ENCODE measurements at regions of chr5 and their contacts with region 1.

Region 1: GRCh38 chr5:38809388-38810359 is 36.1 kb upstream of the OSMR start:
- DNase-seq: peak; percentile 80
- H3K4me3 ChIP-seq: no peak overlapping the region
- H3K27ac ChIP-seq: peak overlapping the region; percentile 68
- H3K4me1 ChIP-seq: peaks cover 50% of the 10 kb centered on the region
- H3K27me3 ChIP-seq: no peaks in the 10 kb centered on the region
- CTCF ChIP-seq: peak; percentile 91

Region 2: DNA sequence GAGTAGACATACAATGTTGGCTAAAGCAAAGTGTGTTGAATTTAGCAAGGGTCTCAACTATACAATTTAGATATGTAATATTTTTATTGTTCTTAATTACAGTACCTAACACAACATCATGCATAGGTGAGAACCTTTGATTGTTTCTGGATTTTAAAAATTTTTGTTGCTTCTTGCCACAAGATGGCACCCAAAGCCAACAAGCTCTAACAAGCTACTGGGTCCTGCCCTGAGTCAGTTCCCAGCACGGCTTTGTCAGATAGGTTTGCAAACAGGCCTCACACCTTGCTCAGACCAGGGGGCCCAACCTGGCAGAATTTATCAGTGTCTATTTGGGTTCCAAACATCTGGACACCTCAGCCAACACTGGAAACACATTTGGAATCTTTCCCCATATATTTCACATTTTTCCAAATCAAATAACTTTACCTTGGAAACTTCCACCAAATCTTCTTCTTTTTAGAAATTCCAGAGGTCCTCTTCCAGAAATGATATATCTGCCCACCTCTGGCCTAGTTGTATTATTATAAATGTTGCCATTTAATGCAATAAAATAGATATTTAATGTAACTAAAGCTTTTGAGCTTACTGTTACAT is 600.8 kb before region 1 on chr5:
- intact Hi-C with region 1: no loop called
- DNase-seq: no peak
- H3K4me3 ChIP-seq: no peak overlapping the region
- H3K27ac ChIP-seq: no peak overlapping the region
- H3K4me1 ChIP-seq: no peaks in the 10 kb centered on the region
- H3K27me3 ChIP-seq: peaks cover 49% of the 10 kb centered on the region
- CTCF ChIP-seq: peak; percentile 59

Region 3: DNA sequence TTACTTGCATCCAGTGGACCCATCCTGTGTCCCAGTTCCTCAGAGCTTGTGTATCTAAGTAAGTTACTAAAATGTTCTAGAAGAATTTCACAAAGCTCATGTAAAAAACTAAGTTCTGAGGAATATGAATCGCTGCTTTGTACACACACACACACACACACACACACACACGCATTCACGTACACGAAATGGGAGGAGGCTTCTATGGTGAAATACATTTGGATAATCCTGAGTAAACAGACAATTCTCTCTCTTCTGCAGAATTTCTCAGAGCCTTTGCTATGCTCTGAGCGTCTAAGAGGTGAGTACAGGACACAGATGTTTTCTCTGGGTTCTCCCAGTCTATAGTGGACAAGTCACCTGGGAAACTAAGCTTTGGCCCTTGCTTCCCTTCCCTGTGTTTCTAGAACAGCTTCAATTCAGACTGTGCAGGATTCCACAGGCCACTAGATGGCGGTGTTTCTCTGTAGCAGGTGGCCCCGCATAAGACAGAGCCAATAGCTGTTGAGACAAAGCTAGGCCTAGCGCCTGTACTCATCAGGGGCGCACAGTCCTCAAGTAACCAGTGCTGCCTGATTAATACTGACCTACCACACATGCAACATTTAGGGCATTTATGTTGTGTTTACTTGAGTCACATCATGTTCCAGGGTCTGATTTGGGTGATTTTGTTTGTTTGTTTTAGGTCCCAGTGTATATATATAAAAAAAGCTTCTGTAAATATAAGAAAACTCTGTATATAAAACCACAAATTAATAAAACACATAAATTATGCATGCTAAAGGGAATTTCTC is 368.0 kb before region 1 on chr5:
- intact Hi-C with region 1: loop called (anchors 5 kb)
- DNase-seq: peak; percentile 82
- H3K4me3 ChIP-seq: no peak overlapping the region
- H3K27ac ChIP-seq: no peak overlapping the region
- H3K4me1 ChIP-seq: peaks cover 17% of the 10 kb centered on the region
- H3K27me3 ChIP-seq: no peaks in the 10 kb centered on the region
- CTCF ChIP-seq: peak; percentile 99

Region 4: GRCh38 chr5:38598994-38599611 is 210.6 kb before region 1 on chr5:
- intact Hi-C with region 1: no loop called
- DNase-seq: no peak
- H3K4me3 ChIP-seq: no peak overlapping the region
- H3K27ac ChIP-seq: peak overlapping the region; percentile 83
- H3K4me1 ChIP-seq: peaks cover 77% of the 10 kb centered on the region
- H3K27me3 ChIP-seq: no peaks in the 10 kb centered on the region
- CTCF ChIP-seq: no peak

Region 5: GRCh38 chr5:38666668-38667498 is 142.8 kb before region 1 on chr5:
- intact Hi-C with region 1: loop called (anchors 10 kb)
- DNase-seq: peak; percentile 43
- H3K4me3 ChIP-seq: no peak overlapping the region
- H3K27ac ChIP-seq: peak overlapping the region; percentile 70
- H3K4me1 ChIP-seq: peaks cover 28% of the 10 kb centered on the region
- H3K27me3 ChIP-seq: no peaks in the 10 kb centered on the region
- CTCF ChIP-seq: peak; percentile 86

Measured in left ventricle myocardium inferior (tissue), 1 donor.